ENCODE measurements at regions of chr6 and their contacts with region 1.

Region 1: GRCh38 chr6:118893807-118894424 is at the start of gene ASF1A:
- DNase-seq: peak; percentile 98
- H3K4me3 Mint-ChIP-seq: peak within 1 kb of the TSS; percentile 88
- H3K27ac Mint-ChIP-seq: peak within 1 kb of the TSS; percentile 98
- H3K4me1 Mint-ChIP-seq: peaks cover 51% of the 10 kb centered on the region
- H3K27me3 Mint-ChIP-seq: peaks cover 1% of the 10 kb centered on the region
- total RNA-seq, gene ASF1A: 32.5 to 32.7 TPM

Region 2: DNA sequence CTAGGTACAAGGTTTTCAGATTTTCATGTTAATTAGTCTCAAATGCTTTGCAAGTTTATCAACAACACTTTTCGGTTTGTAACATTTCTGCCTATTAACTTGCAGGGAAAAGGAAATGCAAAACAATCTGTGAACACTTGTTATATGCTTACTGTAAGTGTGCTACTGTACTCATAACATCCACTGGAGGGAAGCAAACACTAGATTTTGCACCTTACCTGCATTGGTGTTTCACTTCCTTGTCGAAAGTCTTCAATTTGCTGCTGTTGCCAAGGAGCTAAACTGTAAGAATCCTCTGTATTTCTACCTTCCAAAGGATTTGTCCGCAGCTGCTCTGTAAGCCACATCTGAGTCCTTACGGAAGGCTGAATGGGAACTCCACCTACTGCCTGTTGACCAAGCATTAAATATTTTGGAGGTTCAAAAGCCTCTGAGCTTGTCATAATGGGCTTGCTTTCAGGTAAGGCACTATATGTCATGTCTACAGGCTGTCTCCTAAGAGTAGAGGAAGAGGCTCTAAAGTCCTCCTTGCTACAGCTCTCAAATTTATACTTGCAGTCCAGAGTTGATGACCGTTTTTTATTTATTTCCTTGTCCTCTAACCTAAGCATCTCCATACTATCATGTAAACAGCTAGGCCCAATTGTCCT is 328.5 kb before region 1 on chr6:
- CTCF ChIA-PET with region 1: interaction called, 3 read pairs
- POLR2A ChIA-PET with region 1: no interaction called
- intact Hi-C with region 1: loop called (anchors 2 kb)
- DNase-seq: no peak
- H3K4me3 Mint-ChIP-seq: no peak overlapping the region
- H3K27ac Mint-ChIP-seq: peak overlapping the region; percentile 11
- H3K4me1 Mint-ChIP-seq: peaks cover 17% of the 10 kb centered on the region
- H3K27me3 Mint-ChIP-seq: no peaks in the 10 kb centered on the region

Region 3: GRCh38 chr6:118724211-118724610 is 169.7 kb before region 1 on chr6:
- CTCF ChIA-PET with region 1: no interaction called
- POLR2A ChIA-PET with region 1: no interaction called
- intact Hi-C with region 1: loop called (anchors 5 kb)
- DNase-seq: no peak
- H3K4me3 Mint-ChIP-seq: no peak overlapping the region
- H3K27ac Mint-ChIP-seq: peak overlapping the region; percentile 24
- H3K4me1 Mint-ChIP-seq: peaks cover 55% of the 10 kb centered on the region
- H3K27me3 Mint-ChIP-seq: no peaks in the 10 kb centered on the region

Region 4: DNA sequence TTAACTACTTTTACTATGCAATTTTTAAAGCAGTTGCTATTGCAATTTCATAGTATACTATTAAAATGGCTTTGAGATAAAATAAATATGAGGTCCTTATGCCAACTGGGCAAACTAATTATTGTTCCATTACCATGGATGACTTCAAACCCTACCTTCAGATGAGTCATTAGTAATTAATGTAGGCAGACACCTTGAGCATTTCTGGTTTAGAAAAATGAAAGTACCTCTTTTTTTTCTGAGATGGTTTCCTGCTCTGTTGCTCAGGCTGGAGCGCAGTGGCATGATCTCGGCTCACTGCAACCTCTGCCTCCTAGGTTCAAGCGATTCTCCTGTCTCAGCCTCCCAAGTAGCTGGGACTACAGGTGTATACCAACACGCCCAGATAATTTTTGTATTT is 11.9 kb after region 1 on chr6:
- CTCF ChIA-PET with region 1: interaction called, 13 read pairs
- POLR2A ChIA-PET with region 1: interaction called, 8 read pairs
- intact Hi-C with region 1: loop called (anchors 1 kb)
- DNase-seq: no peak
- H3K4me3 Mint-ChIP-seq: no peak overlapping the region
- H3K27ac Mint-ChIP-seq: peak overlapping the region; percentile 83
- H3K4me1 Mint-ChIP-seq: peaks cover 63% of the 10 kb centered on the region
- H3K27me3 Mint-ChIP-seq: no peaks in the 10 kb centered on the region

Region 5: DNA sequence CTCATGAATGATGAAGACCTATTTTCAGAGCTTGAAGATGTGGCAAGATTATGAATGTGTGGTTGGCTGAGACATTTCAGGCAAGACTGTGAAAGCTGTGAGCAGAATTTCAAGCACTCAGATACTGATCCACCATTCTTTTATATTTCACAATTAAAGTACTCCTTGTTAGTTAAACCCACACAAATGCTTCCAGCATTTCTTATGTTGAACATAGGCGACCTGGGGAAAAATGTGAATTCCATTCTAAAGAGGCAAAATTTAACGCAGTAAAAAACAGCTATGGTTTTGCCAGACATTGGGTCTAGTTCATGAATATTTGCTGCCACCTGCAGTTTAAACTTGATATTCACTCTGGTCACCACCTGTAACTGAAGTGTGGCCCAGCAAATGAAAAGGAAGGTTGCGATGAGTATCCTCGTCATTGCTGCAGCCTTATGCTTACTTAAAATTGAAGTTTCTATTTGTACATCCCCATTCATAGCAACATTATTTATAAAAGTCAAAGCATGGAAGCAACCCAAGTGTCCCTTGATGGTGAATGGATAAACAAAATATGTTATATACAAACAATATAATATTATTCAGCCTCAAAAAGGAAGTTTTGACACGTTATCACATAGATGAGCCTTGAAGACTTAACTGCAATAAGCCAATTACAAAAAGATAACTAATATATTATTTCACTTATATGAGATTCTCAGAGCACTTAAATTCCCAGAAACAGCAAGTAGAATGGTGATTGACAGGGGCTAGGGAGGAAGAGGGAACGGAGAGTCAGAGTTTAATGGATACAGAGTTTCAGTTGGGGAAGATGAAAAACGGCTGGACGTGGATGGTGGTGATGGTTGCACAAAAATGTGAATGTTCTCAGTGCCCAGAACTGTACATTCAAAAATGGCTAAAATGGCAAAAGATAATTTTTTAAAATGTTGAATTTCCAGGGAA is 217.0 kb after region 1 on chr6:
- CTCF ChIA-PET with region 1: interaction called, 6 read pairs
- POLR2A ChIA-PET with region 1: no interaction called
- intact Hi-C with region 1: loop called (anchors 1 kb)
- DNase-seq: peak; percentile 32
- H3K4me3 Mint-ChIP-seq: no peak overlapping the region
- H3K27ac Mint-ChIP-seq: no peak overlapping the region
- H3K4me1 Mint-ChIP-seq: peaks cover 9% of the 10 kb centered on the region
- H3K27me3 Mint-ChIP-seq: no peaks in the 10 kb centered on the region